Vagina (tissue), 2 donors: ENCODE measurements at regions of chr5 and their contacts with region 1.

Region 1: DNA sequence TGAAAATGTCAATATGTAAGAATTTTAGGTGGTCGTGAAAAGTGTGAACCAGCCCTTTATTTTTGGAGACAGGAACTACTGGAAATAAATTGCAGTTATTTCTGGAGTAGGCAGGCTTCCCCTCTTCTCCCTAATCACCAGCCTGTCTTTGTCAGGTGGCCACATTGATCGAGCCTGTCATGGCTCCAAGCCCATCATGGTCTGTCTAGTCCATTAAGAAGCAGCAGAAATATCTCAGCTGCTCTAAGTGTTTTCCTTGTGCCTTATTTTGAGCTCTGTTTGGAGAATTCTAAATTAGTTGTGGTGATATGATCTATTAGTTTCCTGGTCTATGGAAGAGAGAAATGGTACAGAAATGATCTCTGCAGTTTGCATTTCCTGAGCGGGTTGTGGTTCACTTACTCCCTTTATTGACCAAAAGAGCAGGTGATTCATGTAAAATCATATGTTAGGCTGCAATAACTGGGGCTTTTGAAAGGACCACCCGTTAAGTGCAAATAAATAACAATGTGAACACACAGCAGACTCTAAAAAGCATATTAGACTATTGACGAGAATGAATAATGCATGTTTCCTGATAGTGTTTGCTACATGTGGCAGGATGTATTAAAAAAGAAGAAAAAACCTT is 42.3 kb downstream of the BASP1 start:
- DNase-seq: no peak
- H3K4me3 ChIP-seq: no peak overlapping the region
- H3K27ac ChIP-seq: no peak overlapping the region
- H3K4me1 ChIP-seq: no peaks in the 10 kb centered on the region
- H3K27me3 ChIP-seq: no peaks in the 10 kb centered on the region
- CTCF ChIP-seq: no peak
- POLR2A ChIP-seq: no peak

Region 2: DNA sequence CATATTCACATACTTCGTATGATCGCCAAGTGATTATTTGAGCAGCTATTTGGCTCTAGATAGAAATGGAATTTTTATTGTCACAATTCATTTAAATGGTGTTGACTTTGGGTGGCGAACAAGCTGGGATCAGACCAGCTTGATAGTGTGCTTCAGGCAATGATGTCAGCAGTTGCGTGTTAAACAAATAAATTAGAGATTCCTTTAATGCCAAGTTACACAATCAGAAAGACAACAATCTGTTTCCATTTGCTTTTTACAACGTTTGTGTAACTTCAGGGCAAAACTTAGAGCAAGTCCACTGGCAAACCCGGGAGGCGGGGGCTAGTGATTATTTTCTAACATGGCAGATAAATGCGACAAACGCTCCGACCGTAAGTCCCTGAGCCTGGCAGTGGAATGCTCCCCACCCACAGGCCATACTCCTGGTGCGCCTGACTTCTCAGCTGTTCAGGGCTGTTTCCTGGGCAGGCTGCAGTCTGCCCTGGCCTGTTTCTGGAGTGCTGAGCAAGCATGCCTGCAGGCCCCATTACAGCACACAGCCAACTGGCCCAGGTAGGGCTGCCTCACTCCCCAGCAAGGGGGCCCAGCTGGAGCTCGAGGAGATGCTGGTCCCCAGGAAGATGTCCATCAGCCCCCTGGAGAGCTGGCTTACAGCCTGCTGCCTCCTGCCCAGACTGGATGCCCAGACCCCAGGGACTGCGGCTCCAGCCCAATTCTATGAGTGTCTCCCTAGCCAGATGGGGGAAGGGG is 46.4 kb after region 1 on chr5:
- intact Hi-C with region 1: no loop called
- DNase-seq: no peak
- H3K4me3 ChIP-seq: no peak overlapping the region
- H3K27ac ChIP-seq: peak overlapping the region; percentile 5
- H3K4me1 ChIP-seq: peaks cover 29% of the 10 kb centered on the region
- H3K27me3 ChIP-seq: no peaks in the 10 kb centered on the region
- CTCF ChIP-seq: no peak
- POLR2A ChIP-seq: no peak

Region 3: GRCh38 chr5:17503629-17504028 is 243.9 kb after region 1 on chr5:
- intact Hi-C with region 1: loop called (anchors 5 kb)
- DNase-seq: no peak
- H3K4me3 ChIP-seq: no peak overlapping the region
- H3K27ac ChIP-seq: no peak overlapping the region
- H3K4me1 ChIP-seq: no peaks in the 10 kb centered on the region
- H3K27me3 ChIP-seq: no peaks in the 10 kb centered on the region
- CTCF ChIP-seq: no peak
- POLR2A ChIP-seq: no peak